Tibial artery (tissue), 4 donors: ENCODE measurements at regions of chr11 and their contacts with region 1.

Region 1: GRCh38 chr11:126231725-126232459 is 20.3 kb downstream of the FAM118B start:
- DNase-seq: no peak
- H3K4me3 ChIP-seq: no peak overlapping the region
- H3K27ac ChIP-seq: no peak overlapping the region
- H3K4me1 ChIP-seq: no peaks in the 10 kb centered on the region
- H3K27me3 ChIP-seq: no peaks in the 10 kb centered on the region
- CTCF ChIP-seq: no peak

Region 2: GRCh38 chr11:125968354-125968753 is 263.5 kb before region 1 on chr11:
- intact Hi-C with region 1: no loop called
- DNase-seq: no peak
- H3K4me3 ChIP-seq: no peak overlapping the region
- H3K27ac ChIP-seq: no peak overlapping the region
- H3K4me1 ChIP-seq: no peaks in the 10 kb centered on the region
- H3K27me3 ChIP-seq: no peaks in the 10 kb centered on the region
- CTCF ChIP-seq: no peak

Region 3: DNA sequence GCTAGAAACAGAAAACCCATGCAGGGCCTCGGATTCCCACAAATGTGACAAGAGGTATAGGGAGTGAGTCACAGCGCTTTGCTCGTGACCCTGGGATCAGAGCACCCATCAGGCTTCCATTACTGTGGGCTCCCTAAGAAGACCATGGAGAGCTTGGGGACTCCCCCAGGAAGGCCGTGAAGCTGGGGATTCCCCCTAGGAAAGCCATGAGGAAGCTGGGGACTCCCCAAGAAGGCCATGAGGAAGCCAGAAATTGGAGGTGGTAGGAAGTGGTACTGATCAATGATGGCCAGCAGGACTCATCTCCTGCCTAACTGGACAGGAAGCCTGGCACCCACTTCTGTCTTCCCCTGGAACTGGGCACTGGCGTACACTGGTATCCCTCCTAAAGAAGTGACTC is 61.8 kb after region 1 on chr11:
- intact Hi-C with region 1: no loop called
- DNase-seq: no peak
- H3K4me3 ChIP-seq: no peak overlapping the region
- H3K27ac ChIP-seq: no peak overlapping the region
- H3K4me1 ChIP-seq: no peaks in the 10 kb centered on the region
- H3K27me3 ChIP-seq: no peaks in the 10 kb centered on the region
- CTCF ChIP-seq: no peak

Region 4: DNA sequence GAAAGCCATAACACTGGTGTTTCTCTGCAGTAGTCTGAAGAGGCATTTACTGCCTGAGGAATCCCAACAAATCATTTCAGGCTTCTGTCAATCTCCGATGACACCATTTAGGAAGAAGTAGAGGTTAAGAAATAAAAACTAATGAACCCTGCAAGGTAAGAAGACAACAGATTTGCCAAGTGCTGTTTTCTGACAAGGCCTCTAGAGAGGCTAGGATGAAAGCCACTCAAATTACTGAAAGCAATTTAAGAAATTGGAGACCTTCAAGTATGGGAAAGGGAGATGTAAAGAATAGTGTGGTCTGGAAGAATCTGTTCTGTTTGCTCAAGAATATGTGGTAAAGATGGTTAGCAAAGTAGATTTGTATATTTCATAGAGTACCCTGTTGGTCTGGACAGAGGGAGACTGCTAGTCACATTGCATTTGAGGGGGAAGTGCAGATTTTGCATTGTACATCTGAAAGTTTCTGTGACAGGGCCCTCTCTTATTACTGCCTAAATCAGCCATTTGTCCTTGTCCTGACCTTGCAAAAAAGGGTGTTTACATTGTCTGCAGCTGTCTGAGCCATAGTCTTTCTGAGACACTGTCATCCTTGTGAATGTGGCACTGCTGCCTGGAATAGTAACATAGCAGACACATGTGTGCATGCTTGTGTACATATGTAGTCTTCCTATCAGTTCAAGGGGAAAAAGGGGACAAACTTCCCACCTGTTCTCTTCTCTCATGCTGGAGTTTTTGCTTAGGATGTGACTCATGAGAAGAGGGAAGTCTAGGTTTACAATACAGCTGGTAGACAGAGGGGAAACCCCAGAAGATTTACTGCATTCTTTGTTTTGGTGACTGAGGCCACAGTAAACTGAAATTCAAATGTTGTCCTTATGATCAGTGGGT is 1408.9 kb after region 1 on chr11:
- intact Hi-C with region 1: loop called (anchors 5 kb)
- DNase-seq: no peak
- H3K4me3 ChIP-seq: no peak overlapping the region
- H3K27ac ChIP-seq: no peak overlapping the region
- H3K4me1 ChIP-seq: no peaks in the 10 kb centered on the region
- H3K27me3 ChIP-seq: no peaks in the 10 kb centered on the region
- CTCF ChIP-seq: no peak